WTC11 (cell line): ENCODE measurements at regions of chr19 and their contacts with region 1.

Region 1: DNA sequence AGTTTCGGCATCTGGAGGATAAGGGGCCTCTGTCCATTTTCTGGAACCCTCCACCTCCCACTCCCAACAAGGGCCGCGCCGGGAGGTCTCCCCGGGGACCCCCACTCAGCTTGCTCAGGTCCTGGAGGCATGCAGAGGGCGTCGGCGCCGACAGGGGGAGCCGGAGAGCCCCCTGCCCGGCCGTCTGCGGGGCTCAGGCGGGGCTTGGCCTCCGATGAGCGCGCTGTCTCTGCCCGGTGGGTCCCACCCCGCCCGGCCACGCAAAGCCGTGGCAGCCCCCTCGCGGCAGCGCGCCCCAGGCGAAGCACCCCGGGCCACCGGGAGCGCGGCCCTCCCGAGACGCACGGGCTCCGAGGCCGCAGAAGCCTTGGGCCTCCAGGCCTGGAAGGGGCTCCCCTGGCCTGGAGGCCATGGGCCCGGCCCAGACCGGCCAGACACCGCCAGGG is 149.7 kb upstream of the ZNF536 start:
- DNase-seq: peak; percentile 76
- ATAC-seq: peak; percentile 77
- H3K4me3 Mint-ChIP-seq: no peak overlapping the region
- H3K27ac Mint-ChIP-seq: no peak overlapping the region
- H3K4me1 Mint-ChIP-seq: peaks cover 31% of the 10 kb centered on the region
- H3K27me3 Mint-ChIP-seq: peaks cover 54% of the 10 kb centered on the region
- CTCF ChIP-seq: peak; percentile 84

Region 2: GRCh38 chr19:30085394-30085793 is 137.1 kb before region 1 on chr19:
- CTCF ChIA-PET with region 1: interaction called, 13 read pairs
- POLR2A ChIA-PET with region 1: no interaction called
- DNase-seq: peak; percentile 62
- ATAC-seq: peak; percentile 83
- H3K4me3 Mint-ChIP-seq: no peak overlapping the region
- H3K27ac Mint-ChIP-seq: no peak overlapping the region
- H3K4me1 Mint-ChIP-seq: no peaks in the 10 kb centered on the region
- H3K27me3 Mint-ChIP-seq: no peaks in the 10 kb centered on the region; the same call in 1 of the 2 replicates
- CTCF ChIP-seq: no peak

Region 3: DNA sequence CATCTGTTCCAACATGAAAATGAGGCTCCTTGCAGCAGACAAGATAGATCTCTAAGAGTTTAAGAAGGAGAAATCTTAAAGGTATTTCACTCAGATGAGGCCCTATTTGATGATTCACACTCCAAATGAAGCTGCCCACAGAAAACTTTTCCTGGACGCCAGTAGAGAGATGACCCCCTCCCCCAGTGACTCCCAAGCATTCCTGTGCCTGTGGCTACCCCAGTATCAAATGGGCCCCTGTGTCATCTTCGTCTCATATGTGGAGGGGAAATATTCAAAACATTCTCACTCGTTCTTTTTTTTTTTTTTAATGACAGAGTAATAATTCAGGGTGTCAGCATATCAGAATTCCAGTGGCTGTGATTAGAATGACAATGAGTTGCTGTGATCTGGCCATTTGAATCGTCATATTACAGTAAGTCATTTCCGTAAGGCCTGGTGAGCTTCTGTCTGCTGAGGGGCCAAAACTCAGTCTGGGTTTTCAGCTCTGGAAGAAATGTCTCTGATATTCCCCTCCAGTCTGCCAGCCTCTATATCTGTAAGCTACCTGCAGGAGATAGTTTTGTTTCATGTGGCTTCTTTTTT is 85.7 kb before region 1 on chr19:
- CTCF ChIA-PET with region 1: no interaction called
- POLR2A ChIA-PET with region 1: no interaction called
- DNase-seq: no peak
- ATAC-seq: no peak
- H3K4me3 Mint-ChIP-seq: no peak overlapping the region
- H3K27ac Mint-ChIP-seq: no peak overlapping the region
- H3K4me1 Mint-ChIP-seq: peaks cover 7% of the 10 kb centered on the region
- H3K27me3 Mint-ChIP-seq: no peaks in the 10 kb centered on the region
- CTCF ChIP-seq: no peak